ENCODE measurements at regions of chr11 and their contacts with region 1.

Region 1: GRCh38 chr11:82867495-82868082 is 32.6 kb downstream of the PRCP start:
- DNase-seq: peak; percentile 26
- ATAC-seq: peak; percentile 74
- H3K4me3 ChIP-seq: no peak overlapping the region
- H3K27ac ChIP-seq: no peak overlapping the region
- H3K4me1 ChIP-seq: peaks cover 7% of the 10 kb centered on the region
- H3K27me3 ChIP-seq: no peaks in the 10 kb centered on the region
- CTCF ChIP-seq: peak; percentile 53 to 75 (median 64); a peak in 5 of 6 replicates
- EP300 ChIP-seq: no peak
- POLR2A ChIP-seq: no peak
- RAD21 ChIP-seq: peak; percentile 81

Region 2: DNA sequence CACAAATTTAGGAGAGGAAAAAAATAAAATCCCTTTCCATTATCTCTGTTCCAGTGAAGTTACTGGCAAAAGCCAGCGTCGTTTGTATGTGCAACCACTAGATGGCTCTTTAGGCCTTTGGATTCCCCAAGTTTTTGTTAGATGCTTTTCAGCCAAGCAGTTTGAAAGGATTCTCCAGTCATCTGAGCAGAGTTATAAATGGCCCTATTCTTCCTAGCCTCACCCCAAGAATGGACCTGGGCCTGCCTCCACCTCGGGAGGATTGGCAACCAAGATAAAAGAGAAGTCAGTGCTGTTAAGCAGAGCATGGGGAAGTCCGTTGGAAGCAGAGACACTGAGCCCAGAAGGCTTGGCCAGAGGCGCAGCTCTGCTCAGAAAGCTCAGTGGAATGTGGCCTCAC is 149.3 kb before region 1 on chr11:
- CTCF ChIA-PET with region 1: interaction called, 12 read pairs
- POLR2A ChIA-PET with region 1: no interaction called
- RAD21 ChIA-PET with region 1: interaction called, 4 read pairs
- SMC1A ChIA-PET with region 1: interaction called, 6 read pairs
- in situ Hi-C with region 1: no loop called
- intact Hi-C with region 1: loop called (anchors 1 kb)
- DNase-seq: no peak
- ATAC-seq: peak; percentile 75
- H3K4me3 ChIP-seq: no peak overlapping the region
- H3K27ac ChIP-seq: no peak overlapping the region
- H3K4me1 ChIP-seq: no peaks in the 10 kb centered on the region
- H3K27me3 ChIP-seq: no peaks in the 10 kb centered on the region
- CTCF ChIP-seq: peak; percentile 72 to 75 (median 73)
- EP300 ChIP-seq: no peak
- POLR2A ChIP-seq: no peak
- RAD21 ChIP-seq: peak; percentile 76

Region 3: DNA sequence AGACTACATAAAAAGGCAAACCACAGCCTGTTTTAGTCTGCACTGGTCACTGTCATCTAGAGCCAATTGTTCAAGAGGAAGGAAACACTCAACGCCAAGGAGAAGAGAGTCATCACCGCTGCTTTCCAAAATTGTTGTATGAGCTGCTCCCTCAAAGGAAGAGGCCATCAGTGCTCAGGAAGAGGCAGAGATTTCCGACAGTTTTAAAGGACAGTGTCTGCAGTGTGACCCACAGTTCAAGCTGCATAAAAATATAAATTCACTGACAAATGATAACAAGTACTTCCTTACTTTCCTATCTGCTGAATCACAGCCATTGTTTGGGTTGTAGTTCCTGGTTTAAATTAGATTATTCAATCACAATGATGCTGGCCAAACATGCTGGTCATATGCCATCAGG is 16.3 kb after region 1 on chr11:
- CTCF ChIA-PET with region 1: interaction called, 36 read pairs
- POLR2A ChIA-PET with region 1: no interaction called
- RAD21 ChIA-PET with region 1: interaction called, 5 read pairs
- SMC1A ChIA-PET with region 1: interaction called, 11 read pairs
- in situ Hi-C with region 1: no loop called
- intact Hi-C with region 1: no loop called
- DNase-seq: no peak
- ATAC-seq: no peak
- H3K4me3 ChIP-seq: no peak overlapping the region
- H3K27ac ChIP-seq: no peak overlapping the region
- H3K4me1 ChIP-seq: no peaks in the 10 kb centered on the region
- H3K27me3 ChIP-seq: no peaks in the 10 kb centered on the region
- CTCF ChIP-seq: no peak
- EP300 ChIP-seq: no peak
- POLR2A ChIP-seq: no peak
- RAD21 ChIP-seq: no peak

Region 4: GRCh38 chr11:82900277-82901164 is 32.9 kb after region 1 on chr11 and contains the start of gene PRCP:
- CTCF ChIA-PET with region 1: interaction called, 51 read pairs
- POLR2A ChIA-PET with region 1: interaction called, 8 read pairs
- RAD21 ChIA-PET with region 1: interaction called, 33 read pairs
- SMC1A ChIA-PET with region 1: interaction called, 57 read pairs
- in situ Hi-C with region 1: no loop called
- intact Hi-C with region 1: loop called (anchors 1 kb)
- DNase-seq: peak; percentile 84
- ATAC-seq: peak; percentile 88
- H3K4me3 ChIP-seq: peak within 1 kb of the TSS; percentile 82
- H3K27ac ChIP-seq: peak within 1 kb of the TSS; percentile 84
- H3K4me1 ChIP-seq: peaks cover 15% of the 10 kb centered on the region
- H3K27me3 ChIP-seq: no peaks in the 10 kb centered on the region
- CTCF ChIP-seq: no peak
- EP300 ChIP-seq: 0 out of 4 replicates have a peak, but pooled peaks of 1 of the 2 experiments have one; percentile 12
- POLR2A ChIP-seq: peak; percentile 84
- RAD21 ChIP-seq: no peak
- polyA plus RNA-seq, gene PRCP: 21.5 to 25.3 TPM

Region 5: DNA sequence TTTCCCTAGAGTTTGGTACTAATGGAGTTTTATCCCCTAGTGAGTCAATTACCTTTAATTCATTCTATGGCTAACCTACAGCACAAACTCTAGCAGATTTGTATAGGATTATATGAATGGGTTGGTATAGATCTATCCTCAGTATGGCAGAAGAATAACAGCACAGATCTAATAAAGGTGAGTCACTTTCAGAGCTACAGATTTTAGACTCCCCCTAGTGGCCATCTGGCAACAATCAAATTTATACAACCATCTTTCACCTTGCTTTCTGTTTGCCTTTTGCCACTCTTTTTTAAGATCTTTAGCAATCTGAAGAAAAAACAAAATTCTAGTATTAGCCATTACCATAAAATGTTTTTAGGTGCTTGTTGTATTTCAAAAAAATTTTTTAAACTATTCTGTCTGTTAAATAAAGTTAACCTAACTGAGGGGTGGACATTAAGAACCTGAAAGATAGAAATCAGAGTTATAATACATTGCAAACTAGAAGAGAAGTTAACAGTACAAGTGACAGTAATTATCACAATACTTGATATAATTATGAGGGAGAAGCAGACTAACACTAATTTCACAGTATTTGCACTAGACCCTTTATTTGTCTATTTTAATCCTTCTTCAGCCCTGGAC is 59.8 kb after region 1 on chr11:
- CTCF ChIA-PET with region 1: interaction called, 13 read pairs
- POLR2A ChIA-PET with region 1: no interaction called
- RAD21 ChIA-PET with region 1: interaction called, 6 read pairs
- SMC1A ChIA-PET with region 1: interaction called, 6 read pairs
- in situ Hi-C with region 1: no loop called
- intact Hi-C with region 1: no loop called
- DNase-seq: no peak
- ATAC-seq: peak; percentile 93
- H3K4me3 ChIP-seq: no peak overlapping the region
- H3K27ac ChIP-seq: no peak overlapping the region; the same call in 1 of the 2 replicates
- H3K4me1 ChIP-seq: peaks cover 20% of the 10 kb centered on the region
- H3K27me3 ChIP-seq: no peaks in the 10 kb centered on the region
- CTCF ChIP-seq: peak; percentile 73 to 77 (median 76)
- EP300 ChIP-seq: no peak
- POLR2A ChIP-seq: no peak
- RAD21 ChIP-seq: peak; percentile 63

Region 6: DNA sequence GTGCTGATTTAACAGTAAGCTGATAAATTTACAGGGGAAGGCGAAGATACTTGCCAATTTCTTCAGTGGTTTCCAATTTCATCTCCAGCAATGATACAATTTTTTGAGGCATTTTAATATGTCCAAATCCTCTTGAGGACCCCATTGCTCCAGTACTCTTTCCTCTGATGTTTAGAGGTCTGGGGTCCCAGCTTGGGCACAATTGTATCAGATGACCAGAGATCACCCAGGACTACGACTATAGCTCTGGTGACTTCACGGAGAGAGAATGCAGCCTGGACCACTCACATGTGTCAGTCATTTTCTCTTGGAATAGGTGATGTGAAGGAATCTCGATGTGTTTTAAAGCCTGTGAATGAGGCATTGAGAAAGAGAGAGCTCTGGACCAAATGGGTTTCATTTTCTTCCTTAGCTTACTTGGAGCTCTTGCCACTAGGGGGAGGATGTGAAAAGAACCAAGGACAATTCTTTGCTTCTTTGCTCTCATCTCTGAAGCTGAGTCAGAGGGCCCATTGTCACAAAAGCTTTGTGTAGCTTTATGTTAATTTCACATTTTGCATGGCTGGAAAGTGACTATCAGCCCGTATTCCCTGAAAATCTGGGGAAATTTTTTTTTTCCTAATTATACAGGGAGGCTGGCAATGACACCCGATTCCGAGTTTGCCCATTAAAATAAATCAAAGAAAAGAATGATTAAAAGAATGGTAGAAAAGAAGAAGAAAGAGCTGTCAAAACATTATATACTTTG is 425.3 kb after region 1 on chr11:
- CTCF ChIA-PET with region 1: interaction called, 14 read pairs
- POLR2A ChIA-PET with region 1: no interaction called
- RAD21 ChIA-PET with region 1: interaction called, 10 read pairs
- SMC1A ChIA-PET with region 1: interaction called, 6 read pairs
- in situ Hi-C with region 1: no loop called
- intact Hi-C with region 1: no loop called
- DNase-seq: no peak
- ATAC-seq: peak; percentile 86
- H3K4me3 ChIP-seq: no peak overlapping the region
- H3K27ac ChIP-seq: no peak overlapping the region
- H3K4me1 ChIP-seq: peaks cover 12% of the 10 kb centered on the region; the same call in 1 of the 2 replicates
- H3K27me3 ChIP-seq: no peaks in the 10 kb centered on the region
- CTCF ChIP-seq: peak; percentile 65 to 74 (median 70)
- EP300 ChIP-seq: no peak
- POLR2A ChIP-seq: no peak
- RAD21 ChIP-seq: peak; percentile 60